ENCODE measurements at regions of chr11 and their contacts with region 1.

Region 1: GRCh38 chr11:96875712-96876111 is 485.9 kb downstream of the JRKL start:
- DNase-seq: no peak
- H3K4me3 ChIP-seq: no peak overlapping the region
- H3K27ac ChIP-seq: no peak overlapping the region
- H3K4me1 ChIP-seq: no peaks in the 10 kb centered on the region
- H3K27me3 ChIP-seq: no peaks in the 10 kb centered on the region
- CTCF ChIP-seq: no peak

Region 2: DNA sequence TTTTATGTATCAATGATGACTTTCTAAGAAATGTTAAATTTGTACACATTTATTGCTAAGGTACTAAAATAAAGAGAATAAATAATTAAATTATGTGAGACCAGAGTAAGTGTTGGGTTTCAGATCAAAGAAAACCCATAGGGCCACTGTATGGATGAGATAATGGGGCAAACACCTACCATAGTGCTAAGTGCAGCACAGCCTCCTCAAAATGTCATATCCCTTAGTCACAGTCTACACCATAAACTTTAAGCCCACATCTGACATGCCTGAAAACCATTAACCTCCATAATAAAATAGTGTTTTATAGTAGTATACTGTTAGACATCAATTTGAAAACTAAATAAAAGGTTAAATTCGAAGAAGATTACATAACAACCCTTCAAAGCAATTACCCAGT is 1682.2 kb before region 1 on chr11:
- CTCF ChIA-PET with region 1: no interaction called
- POLR2A ChIA-PET with region 1: interaction called, 10 read pairs
- intact Hi-C with region 1: no loop called
- DNase-seq: no peak
- H3K4me3 ChIP-seq: no peak overlapping the region
- H3K27ac ChIP-seq: no peak overlapping the region
- H3K4me1 ChIP-seq: no peaks in the 10 kb centered on the region
- H3K27me3 ChIP-seq: no peaks in the 10 kb centered on the region
- CTCF ChIP-seq: no peak

Region 3: DNA sequence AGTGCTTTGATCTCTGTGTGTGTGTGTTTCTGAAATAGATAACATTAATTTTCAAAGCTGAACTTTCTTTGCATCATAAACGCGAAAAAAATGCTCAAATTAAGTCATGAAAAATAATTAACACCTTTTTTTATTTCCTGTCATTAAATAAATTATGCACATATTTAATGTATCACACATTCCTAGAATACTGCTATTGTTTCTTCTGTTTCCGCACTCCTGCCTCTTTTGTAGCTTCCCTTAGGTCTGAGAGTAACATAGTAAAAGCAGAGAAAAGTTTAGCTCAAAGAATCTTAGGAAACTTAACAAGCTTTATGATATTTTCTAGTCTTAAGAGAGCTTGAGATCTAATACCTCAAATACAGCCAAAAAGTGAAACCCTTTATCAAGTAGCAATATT is 18.3 kb after region 1 on chr11:
- CTCF ChIA-PET with region 1: no interaction called
- POLR2A ChIA-PET with region 1: no interaction called
- intact Hi-C with region 1: no loop called
- DNase-seq: no peak
- H3K4me3 ChIP-seq: no peak overlapping the region
- H3K27ac ChIP-seq: no peak overlapping the region
- H3K4me1 ChIP-seq: no peaks in the 10 kb centered on the region
- H3K27me3 ChIP-seq: no peaks in the 10 kb centered on the region
- CTCF ChIP-seq: no peak

Measured in PC-9 (cell line).